Breast epithelium (tissue), 4 donors: ENCODE measurements at regions of chr2 and their contacts with region 1.

Region 1: GRCh38 chr2:195451160-195451559 is 205.9 kb upstream of the SLC39A10 start:
- DNase-seq: no peak
- H3K4me3 ChIP-seq: no peak overlapping the region
- H3K27ac ChIP-seq: no peak overlapping the region
- H3K4me1 ChIP-seq: no peaks in the 10 kb centered on the region
- H3K27me3 ChIP-seq: no peaks in the 10 kb centered on the region
- CTCF ChIP-seq: no peak
- POLR2A ChIP-seq: no peak

Region 2: GRCh38 chr2:195270466-195271039 is 180.6 kb before region 1 on chr2:
- intact Hi-C with region 1: no loop called
- DNase-seq: no peak
- H3K4me3 ChIP-seq: no peak overlapping the region
- H3K27ac ChIP-seq: no peak overlapping the region
- H3K4me1 ChIP-seq: no peaks in the 10 kb centered on the region
- H3K27me3 ChIP-seq: no peaks in the 10 kb centered on the region
- CTCF ChIP-seq: no peak
- POLR2A ChIP-seq: no peak

Region 3: GRCh38 chr2:195434346-195434745 is 16.8 kb before region 1 on chr2:
- intact Hi-C with region 1: no loop called
- DNase-seq: no peak
- H3K4me3 ChIP-seq: no peak overlapping the region
- H3K27ac ChIP-seq: no peak overlapping the region
- H3K4me1 ChIP-seq: no peaks in the 10 kb centered on the region
- H3K27me3 ChIP-seq: no peaks in the 10 kb centered on the region
- CTCF ChIP-seq: no peak
- POLR2A ChIP-seq: no peak

Region 4: GRCh38 chr2:195495966-195496365 is 44.8 kb after region 1 on chr2:
- intact Hi-C with region 1: loop called (anchors 2 kb)
- DNase-seq: no peak
- H3K4me3 ChIP-seq: no peak overlapping the region
- H3K27ac ChIP-seq: no peak overlapping the region
- H3K4me1 ChIP-seq: no peaks in the 10 kb centered on the region
- H3K27me3 ChIP-seq: no peaks in the 10 kb centered on the region
- CTCF ChIP-seq: no peak
- POLR2A ChIP-seq: no peak